ENCODE measurements at regions of chr11 and their contacts with region 1.

Region 1: GRCh38 chr11:72831513-72832300 is 17.5 kb downstream of the ATG16L2 start:
- DNase-seq: no peak
- H3K4me3 ChIP-seq: no peak overlapping the region
- H3K27ac ChIP-seq: peak overlapping the region; percentile 59 to 76 (median 72)
- H3K4me1 ChIP-seq: peaks cover 52 to 68% (median 59%) of the 10 kb centered on the region in 4 donors
- H3K27me3 ChIP-seq: no peaks in the 10 kb centered on the region
- CTCF ChIP-seq: peak; percentile 90 to 98 (median 94)
- EP300 ChIP-seq: no peak
- POLR2A ChIP-seq: no peak

Region 2: DNA sequence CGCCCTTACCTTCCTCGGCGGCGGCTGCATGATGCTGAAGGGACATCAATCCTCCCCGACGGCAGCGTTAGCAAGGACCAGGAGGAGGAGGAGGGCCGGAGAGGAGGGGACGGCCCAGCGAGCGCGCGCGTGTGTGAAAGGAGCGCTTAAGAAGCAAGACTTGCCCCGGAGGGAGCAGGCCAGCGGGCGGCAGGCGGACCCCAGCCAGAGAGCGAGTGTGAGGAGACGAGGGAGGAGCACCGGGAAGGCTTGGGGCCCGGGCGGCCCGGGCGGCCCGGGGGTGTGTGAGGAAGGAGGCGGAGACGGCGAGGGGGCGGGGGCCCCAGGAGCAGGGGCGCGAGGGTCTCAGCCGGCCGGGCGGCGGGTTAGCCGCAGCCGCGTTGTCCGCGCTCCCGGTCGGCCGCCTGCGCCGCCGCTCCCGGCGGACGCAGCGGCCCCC is 310.2 kb after region 1 on chr11:
- intact Hi-C with region 1: loop called (anchors 5 kb)
- DNase-seq: peak; percentile 93
- H3K4me3 ChIP-seq: peak overlapping the region; percentile 85 to 94 (median 92)
- H3K27ac ChIP-seq: peak overlapping the region; percentile 96 to 98 (median 97)
- H3K4me1 ChIP-seq: peaks cover 18 to 54% (median 45%) of the 10 kb centered on the region in 4 donors
- H3K27me3 ChIP-seq: no peaks in the 10 kb centered on the region
- CTCF ChIP-seq: no peak
- EP300 ChIP-seq: no peak
- POLR2A ChIP-seq: no peak

Region 3: GRCh38 chr11:73242251-73243079 is 410.8 kb after region 1 on chr11:
- intact Hi-C with region 1: loop called (anchors 5 kb)
- DNase-seq: no peak
- H3K4me3 ChIP-seq: peak overlapping the region; percentile 26 to 42 (median 33)
- H3K27ac ChIP-seq: no peak overlapping the region
- H3K4me1 ChIP-seq: peaks cover 24 to 46% (median 24%) of the 10 kb centered on the region in 4 donors
- H3K27me3 ChIP-seq: no peaks in the 10 kb centered on the region
- CTCF ChIP-seq: peak; percentile 78 to 87 (median 86)
- EP300 ChIP-seq: no peak
- POLR2A ChIP-seq: no peak

Region 4: DNA sequence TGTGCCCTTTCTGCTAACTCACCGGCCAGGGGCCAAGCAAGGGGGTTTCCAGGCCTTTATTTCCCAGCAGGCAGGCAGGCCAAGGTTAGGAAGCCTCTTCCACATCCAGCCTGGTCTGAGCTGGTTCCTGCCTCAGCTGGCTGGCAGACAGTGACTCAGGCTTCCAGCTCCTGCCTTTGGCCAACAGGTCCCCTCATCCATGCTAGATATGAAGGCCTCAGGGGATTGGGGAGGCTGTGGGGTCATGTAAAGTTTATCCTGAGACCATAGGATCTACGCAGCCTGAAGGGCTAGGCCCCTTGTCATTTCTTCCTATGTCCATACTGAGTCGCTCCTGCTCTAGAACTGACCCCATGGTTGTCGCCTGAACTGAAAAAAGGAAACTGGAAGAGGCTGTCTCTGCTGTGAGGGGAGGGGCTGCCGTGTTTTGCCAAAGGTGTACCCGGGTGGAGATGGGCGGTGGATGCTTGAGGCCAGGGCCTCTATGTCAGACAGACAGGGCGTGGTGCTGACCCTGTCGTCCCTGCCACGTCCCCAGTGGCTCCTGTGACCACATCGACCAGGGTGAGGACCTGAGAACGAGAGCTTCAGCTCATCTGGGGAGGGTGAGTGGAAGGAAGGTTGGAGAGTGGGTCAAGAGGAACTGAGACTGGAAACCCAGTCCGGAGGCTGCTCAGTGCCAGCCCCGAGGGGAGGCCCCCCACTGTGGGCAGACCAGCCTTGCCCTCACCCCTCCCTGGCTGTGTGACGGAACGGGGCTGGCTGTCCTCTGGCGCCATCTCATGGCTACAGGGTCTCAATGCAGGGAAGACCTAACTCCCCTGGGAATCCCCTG is 457.4 kb after region 1 on chr11:
- intact Hi-C with region 1: loop called (anchors 5 kb)
- DNase-seq: no peak
- H3K4me3 ChIP-seq: peak overlapping the region; percentile 25 to 42 (median 30)
- H3K27ac ChIP-seq: peak overlapping the region; percentile 24 to 51 (median 40)
- H3K4me1 ChIP-seq: peaks cover 19 to 30% (median 25%) of the 10 kb centered on the region in 4 donors
- H3K27me3 ChIP-seq: no peaks in the 10 kb centered on the region
- CTCF ChIP-seq: peak; percentile 80 to 93 (median 86)
- EP300 ChIP-seq: no peak
- POLR2A ChIP-seq: no peak

Region 5: GRCh38 chr11:73779084-73779902 is 947.6 kb after region 1 on chr11:
- intact Hi-C with region 1: no loop called
- DNase-seq: peak; percentile 99
- H3K4me3 ChIP-seq: peak overlapping the region; percentile 56 to 70 (median 62)
- H3K27ac ChIP-seq: peak overlapping the region; percentile 89 to 96 (median 94)
- H3K4me1 ChIP-seq: peaks cover 4 to 6% (median 5%) of the 10 kb centered on the region in 4 donors
- H3K27me3 ChIP-seq: no peaks in the 10 kb centered on the region
- CTCF ChIP-seq: no peak
- EP300 ChIP-seq: no peak
- POLR2A ChIP-seq: no peak

Measured in esophagus muscularis mucosa (tissue), 4 donors.